ENCODE measurements at regions of chr12 and their contacts with region 1.

Region 1: DNA sequence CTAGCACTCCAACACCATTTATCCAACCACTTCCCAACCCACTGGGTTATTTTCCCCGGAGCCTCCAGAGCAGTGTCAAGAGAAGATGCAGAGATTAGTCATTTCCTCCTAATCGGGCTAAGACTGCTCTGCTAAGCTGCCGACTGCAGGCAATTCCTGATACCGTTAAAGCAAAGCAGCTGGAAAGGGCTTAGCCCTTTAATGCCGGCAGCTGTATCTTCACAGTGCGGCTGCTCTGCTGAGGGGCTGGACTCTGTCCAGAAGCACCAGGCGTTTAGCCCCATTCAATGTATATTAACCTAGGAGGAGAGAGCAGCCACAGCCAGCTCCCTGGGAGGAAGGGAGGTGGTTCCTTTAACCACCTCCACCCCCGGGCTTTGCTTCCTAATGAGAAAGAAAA is 11.1 kb downstream of the AQP6 start:
- DNase-seq: no peak
- H3K4me3 ChIP-seq: no peak overlapping the region
- H3K27ac ChIP-seq: no peak overlapping the region
- H3K4me1 ChIP-seq: peaks cover 3 to 11% (median 7%) of the 10 kb centered on the region in 4 experiments
- H3K27me3 ChIP-seq: no peaks in the 10 kb centered on the region
- CTCF ChIP-seq: no peak
- EP300 ChIP-seq: no peak
- POLR2A ChIP-seq: no peak
- RAD21 ChIP-seq: no peak

Region 2: GRCh38 chr12:49998453-49998852 is 14.6 kb after region 1 on chr12:
- CTCF ChIA-PET with region 1: interaction called, 16 read pairs
- POLR2A ChIA-PET with region 1: interaction called, 3 read pairs
- DNase-seq: no peak
- H3K4me3 ChIP-seq: no peak overlapping the region
- H3K27ac ChIP-seq: no peak overlapping the region
- H3K4me1 ChIP-seq: no peaks in the 10 kb centered on the region
- H3K27me3 ChIP-seq: no peaks in the 10 kb centered on the region
- CTCF ChIP-seq: peak in 1 of 3 experiments; percentile 24; a peak in 1 of 4 replicates
- EP300 ChIP-seq: no peak
- POLR2A ChIP-seq: no peak
- RAD21 ChIP-seq: no peak

Measured in H1 (cell line).